Esophagus muscularis mucosa (tissue), 4 donors: ENCODE measurements at regions of chr15 and their contacts with region 1.

Region 1: DNA sequence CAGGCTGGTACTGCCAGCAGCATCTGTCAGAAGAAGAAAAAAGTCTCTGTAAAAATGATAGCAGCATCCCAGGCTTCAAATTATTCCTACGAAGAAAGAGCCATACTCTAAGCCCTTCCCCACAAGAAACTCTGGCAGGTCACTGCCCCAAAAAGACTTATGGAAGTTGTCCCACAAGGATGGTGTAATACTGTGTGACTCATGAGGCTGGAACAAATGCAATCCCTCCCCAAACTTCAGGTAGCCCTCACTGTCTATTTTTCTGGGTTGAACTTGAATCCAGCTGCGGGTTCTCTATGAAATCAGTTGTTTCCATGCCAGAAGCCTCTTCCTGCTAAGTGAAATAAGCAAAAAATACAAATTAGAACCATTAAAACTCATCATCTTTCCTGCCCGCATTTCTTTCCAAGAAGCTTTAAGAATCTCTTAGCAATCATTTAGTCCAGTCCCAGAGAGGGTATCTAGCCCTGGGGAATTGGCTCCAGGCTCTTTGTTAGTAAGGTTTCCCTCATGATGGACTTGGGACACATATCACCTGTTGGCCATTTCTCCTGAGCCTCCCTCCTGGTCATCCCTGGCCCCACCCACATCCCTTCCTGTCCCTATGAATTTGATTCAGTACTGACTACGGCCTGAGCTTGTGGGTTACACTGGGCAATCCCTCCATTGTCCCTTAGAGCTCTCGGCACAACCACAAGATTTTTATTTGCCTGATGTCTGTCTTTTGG is 51.7 kb downstream of the FAM174B start:
- DNase-seq: no peak
- H3K4me3 ChIP-seq: no peak overlapping the region
- H3K27ac ChIP-seq: no peak overlapping the region
- H3K4me1 ChIP-seq: peaks cover 0 to 18% (median 8%) of the 10 kb centered on the region in 4 donors
- H3K27me3 ChIP-seq: no peaks in the 10 kb centered on the region
- CTCF ChIP-seq: no peak
- EP300 ChIP-seq: no peak
- POLR2A ChIP-seq: no peak

Region 2: GRCh38 chr15:92527197-92527596 is 76.7 kb before region 1 on chr15:
- intact Hi-C with region 1: loop called (anchors 5 kb)
- DNase-seq: no peak
- H3K4me3 ChIP-seq: no peak overlapping the region
- H3K27ac ChIP-seq: peak overlapping the region in 2 of 4 donors; percentile 36 to 63
- H3K4me1 ChIP-seq: peaks cover 8 to 12% (median 11%) of the 10 kb centered on the region in 4 donors
- H3K27me3 ChIP-seq: peaks cover 0 to 6% (median 0%) of the 10 kb centered on the region in 4 donors
- CTCF ChIP-seq: no peak
- EP300 ChIP-seq: no peak
- POLR2A ChIP-seq: no peak